Activated CD4-positive, alpha-beta T cell treated with anti-CD3 and anti-CD28 coated beads, Interleukin-2, amount 10 ng/mL, durations not matched to agents 7 days and 5 days (primary cell): ENCODE measurements at regions of chr16 and their contacts with region 1.

Region 1: DNA sequence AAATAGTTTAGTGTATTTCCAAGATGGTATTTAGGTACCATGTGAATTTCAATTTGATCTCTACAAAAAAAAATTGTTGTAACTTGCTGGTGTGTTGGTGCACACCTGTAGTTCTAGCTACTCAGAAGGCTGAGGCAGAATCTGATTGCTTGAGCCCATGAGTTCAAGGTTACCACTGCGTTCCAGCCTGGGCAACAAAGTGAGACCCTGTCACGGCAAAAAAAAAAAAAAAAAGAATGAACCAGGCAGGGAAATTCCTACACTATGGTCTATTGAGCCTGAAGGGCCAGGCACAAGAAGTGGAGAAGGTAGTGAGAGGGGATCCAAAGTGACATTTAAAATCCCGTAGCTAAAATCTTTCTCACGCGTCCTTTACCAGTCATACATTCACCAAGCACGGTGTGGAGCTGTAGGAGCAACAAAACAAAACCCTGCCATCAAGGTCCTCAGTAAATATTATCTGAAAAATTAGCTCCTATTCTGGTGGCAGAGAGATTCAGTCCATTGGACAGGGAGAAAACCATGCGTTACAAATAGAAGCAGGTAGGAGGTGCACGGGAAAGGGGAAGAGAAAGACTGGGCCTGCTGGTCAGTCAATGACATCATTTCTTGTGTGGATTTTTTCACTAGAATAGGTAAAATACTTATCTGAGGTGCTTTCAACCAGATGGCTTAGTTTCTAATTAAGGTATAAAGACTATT is 27.3 kb downstream of the TXNDC11 start:
- DNase-seq: no peak
- H3K4me3 Mint-ChIP-seq: no peak overlapping the region
- H3K27ac Mint-ChIP-seq: no peak overlapping the region
- H3K4me1 Mint-ChIP-seq: peaks cover 6% of the 10 kb centered on the region
- H3K27me3 Mint-ChIP-seq: no peaks in the 10 kb centered on the region

Region 2: DNA sequence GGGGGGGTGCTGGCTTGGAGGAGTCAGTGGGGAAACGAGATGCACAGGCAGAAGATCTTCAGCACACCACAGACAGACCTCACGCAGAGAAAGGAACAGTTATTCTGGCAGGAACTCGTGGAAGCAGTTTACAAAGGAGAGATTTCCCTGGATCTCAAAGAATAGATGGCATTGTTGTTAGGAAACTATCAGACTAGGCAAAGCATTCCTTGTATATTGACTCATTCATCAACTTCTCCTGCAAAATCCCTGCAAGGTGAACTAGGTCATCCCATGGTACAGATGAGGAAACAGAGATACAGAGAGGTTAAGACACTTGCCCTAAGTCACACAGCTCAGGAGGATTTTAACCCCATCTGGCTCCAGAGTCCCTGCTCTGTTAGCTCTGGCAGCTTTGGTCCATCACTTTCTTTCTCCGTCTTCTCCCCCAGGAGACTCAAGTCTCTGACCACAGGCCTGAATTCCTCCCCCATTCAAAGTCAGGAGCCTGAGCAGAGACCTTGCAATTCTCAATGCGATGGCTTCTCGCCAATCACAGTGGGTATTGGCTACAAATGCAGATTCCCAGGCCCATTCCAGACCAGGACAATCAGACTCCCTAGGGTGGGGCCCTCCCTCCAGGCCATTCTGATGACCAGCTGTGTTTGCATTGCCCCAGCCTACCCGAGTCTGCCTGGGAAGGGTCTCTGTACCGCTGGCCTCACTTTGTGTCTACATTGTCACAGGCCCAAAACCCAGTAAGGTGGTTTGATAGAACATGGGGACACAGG is 185.0 kb before region 1 on chr16:
- CTCF ChIA-PET with region 1: interaction called, 13 read pairs
- POLR2A ChIA-PET with region 1: no interaction called
- DNase-seq: no peak
- H3K4me3 Mint-ChIP-seq: no peak overlapping the region
- H3K27ac Mint-ChIP-seq: no peak overlapping the region
- H3K4me1 Mint-ChIP-seq: peaks cover 9% of the 10 kb centered on the region
- H3K27me3 Mint-ChIP-seq: peaks cover 13% of the 10 kb centered on the region

Region 3: GRCh38 chr16:11639925-11640899 is 75.2 kb before region 1 on chr16:
- CTCF ChIA-PET with region 1: interaction called, 3 read pairs
- POLR2A ChIA-PET with region 1: interaction called, 10 read pairs
- DNase-seq: no peak
- H3K4me3 Mint-ChIP-seq: no peak overlapping the region
- H3K27ac Mint-ChIP-seq: no peak overlapping the region
- H3K4me1 Mint-ChIP-seq: peaks cover 18% of the 10 kb centered on the region
- H3K27me3 Mint-ChIP-seq: peaks cover 9% of the 10 kb centered on the region